H1 (cell line): ENCODE measurements at regions of chr16 and their contacts with region 1.

Region 1: DNA sequence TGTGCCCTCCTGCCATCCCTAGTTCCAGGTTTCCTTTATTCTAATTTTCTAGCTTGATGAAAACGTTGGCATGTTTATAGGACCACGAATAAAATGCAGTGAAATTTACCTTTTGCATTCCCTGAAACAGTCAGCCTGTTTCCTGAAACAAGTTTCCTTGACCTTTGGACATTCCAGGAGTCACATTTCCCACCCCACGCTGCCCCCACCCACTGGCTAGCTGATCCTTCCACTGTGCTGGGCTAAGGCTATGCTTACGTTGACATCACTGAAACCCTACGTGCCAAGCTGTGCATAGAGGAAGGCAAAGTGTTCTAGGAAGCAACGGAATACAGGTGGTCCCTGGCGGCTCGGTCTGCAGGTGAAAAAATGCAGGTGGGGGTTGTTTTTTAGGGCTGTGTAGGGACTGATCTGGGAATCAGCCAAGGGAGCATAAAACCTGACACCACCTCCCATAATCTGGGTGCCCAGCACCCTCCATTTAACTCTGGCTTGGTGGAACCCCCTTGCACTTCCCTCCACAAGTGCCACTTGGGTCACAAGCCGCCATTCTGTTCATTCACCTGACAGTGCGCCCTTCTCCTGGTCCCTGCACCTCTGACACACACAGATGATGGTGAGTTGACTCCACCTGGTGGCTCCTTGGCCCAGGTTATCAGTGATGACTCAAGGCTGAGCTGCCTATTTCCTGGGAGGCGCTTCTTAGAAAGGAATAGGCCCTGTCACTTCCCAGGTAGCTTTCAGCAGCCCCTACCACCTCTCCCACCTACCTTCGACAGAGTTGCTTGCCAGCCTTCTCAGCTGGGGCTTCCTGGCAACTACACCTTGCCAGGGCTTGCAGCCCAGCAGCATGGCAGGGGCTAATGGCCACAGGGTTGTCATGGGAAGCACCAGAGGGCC is 83.7 kb downstream of the N4BP1 start:
- DNase-seq: peak in 1 of 2 experiments; percentile 50
- H3K4me3 ChIP-seq: no peak overlapping the region
- H3K27ac ChIP-seq: no peak overlapping the region
- H3K4me1 ChIP-seq: peaks cover 0 to 3% (median 0%) of the 10 kb centered on the region in 4 experiments; a peak in 1 of 7 replicates
- H3K27me3 ChIP-seq: no peaks in the 10 kb centered on the region
- CTCF ChIP-seq: peak; percentile 76 to 90 (median 79)
- EP300 ChIP-seq: no peak
- POLR2A ChIP-seq: no peak
- RAD21 ChIP-seq: peak; percentile 93 to 95

Region 2: GRCh38 chr16:48353565-48354163 is 172.6 kb before region 1 on chr16:
- CTCF ChIA-PET with region 1: interaction called, 10 read pairs
- POLR2A ChIA-PET with region 1: interaction called, 3 read pairs
- DNase-seq: peak; percentile 51 to 63
- H3K4me3 ChIP-seq: no peak overlapping the region
- H3K27ac ChIP-seq: no peak overlapping the region
- H3K4me1 ChIP-seq: peaks cover 0 to 2% (median 0%) of the 10 kb centered on the region in 4 experiments; a peak in 1 of 7 replicates
- H3K27me3 ChIP-seq: no peaks in the 10 kb centered on the region
- CTCF ChIP-seq: peak; percentile 79 to 99 (median 96)
- EP300 ChIP-seq: no peak
- POLR2A ChIP-seq: peak in 1 of 2 experiments; percentile 22; a peak in 1 of 3 replicates
- RAD21 ChIP-seq: peak; percentile 78 to 84

Region 3: DNA sequence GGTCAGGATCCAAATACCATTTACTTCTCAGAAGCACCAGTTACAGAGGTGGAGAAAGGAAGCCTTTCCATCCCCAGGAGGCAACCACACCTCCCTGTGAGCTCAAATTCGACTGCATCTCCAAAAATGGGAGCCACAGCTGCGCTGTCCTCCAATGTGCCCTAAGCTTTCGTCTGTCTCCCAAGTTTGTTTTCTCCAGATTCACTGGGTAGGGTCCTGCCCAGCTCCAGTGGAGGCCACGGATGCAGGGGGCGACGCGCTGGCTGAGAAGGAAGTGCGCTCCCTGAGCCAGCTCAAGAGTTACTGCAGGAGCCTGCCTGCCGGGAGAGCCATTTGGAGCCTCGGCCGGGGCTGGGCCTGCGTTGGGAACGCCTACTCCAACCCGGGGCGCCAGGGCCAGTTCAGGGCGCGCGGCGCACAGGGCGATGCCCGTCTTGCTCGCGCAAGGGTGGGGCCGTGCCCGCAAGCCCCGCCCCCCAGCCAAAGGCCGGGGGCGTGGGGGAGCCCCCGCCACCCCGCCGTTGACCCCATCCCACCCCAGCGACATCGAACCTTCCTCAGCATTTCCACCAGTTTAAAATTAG is 160.6 kb before region 1 on chr16:
- CTCF ChIA-PET with region 1: interaction called, 12 read pairs
- POLR2A ChIA-PET with region 1: interaction called, 4 read pairs
- DNase-seq: peak; percentile 82 to 93
- H3K4me3 ChIP-seq: peak overlapping the region; percentile 60 to 87 (median 74)
- H3K27ac ChIP-seq: peak overlapping the region; percentile 54
- H3K4me1 ChIP-seq: peaks cover 2 to 11% (median 6%) of the 10 kb centered on the region in 4 experiments; a peak in 5 of 7 replicates
- H3K27me3 ChIP-seq: no peaks in the 10 kb centered on the region
- CTCF ChIP-seq: peak in 2 of 3 experiments; percentile 13 to 19; a peak in 2 of 4 replicates
- EP300 ChIP-seq: no peak
- POLR2A ChIP-seq: peak; percentile 88 to 92
- RAD21 ChIP-seq: no peak; a peak in 1 of 4 replicates

Region 4: GRCh38 chr16:48491517-48491916 is 34.8 kb before region 1 on chr16:
- CTCF ChIA-PET with region 1: no interaction called
- POLR2A ChIA-PET with region 1: no interaction called
- DNase-seq: no peak
- H3K4me3 ChIP-seq: no peak overlapping the region
- H3K27ac ChIP-seq: no peak overlapping the region
- H3K4me1 ChIP-seq: no peaks in the 10 kb centered on the region
- H3K27me3 ChIP-seq: no peaks in the 10 kb centered on the region
- CTCF ChIP-seq: no peak
- EP300 ChIP-seq: no peak
- POLR2A ChIP-seq: no peak
- RAD21 ChIP-seq: no peak

Region 5: GRCh38 chr16:48542020-48542473 is 15.7 kb after region 1 on chr16:
- CTCF ChIA-PET with region 1: interaction called, 10 read pairs
- POLR2A ChIA-PET with region 1: interaction called, 3 read pairs
- DNase-seq: no peak
- H3K4me3 ChIP-seq: no peak overlapping the region
- H3K27ac ChIP-seq: no peak overlapping the region
- H3K4me1 ChIP-seq: no peaks in the 10 kb centered on the region; a peak in 1 of 7 replicates
- H3K27me3 ChIP-seq: no peaks in the 10 kb centered on the region
- CTCF ChIP-seq: peak; percentile 46 to 62 (median 51)
- EP300 ChIP-seq: no peak
- POLR2A ChIP-seq: no peak
- RAD21 ChIP-seq: peak; percentile 67 to 77

Region 6: DNA sequence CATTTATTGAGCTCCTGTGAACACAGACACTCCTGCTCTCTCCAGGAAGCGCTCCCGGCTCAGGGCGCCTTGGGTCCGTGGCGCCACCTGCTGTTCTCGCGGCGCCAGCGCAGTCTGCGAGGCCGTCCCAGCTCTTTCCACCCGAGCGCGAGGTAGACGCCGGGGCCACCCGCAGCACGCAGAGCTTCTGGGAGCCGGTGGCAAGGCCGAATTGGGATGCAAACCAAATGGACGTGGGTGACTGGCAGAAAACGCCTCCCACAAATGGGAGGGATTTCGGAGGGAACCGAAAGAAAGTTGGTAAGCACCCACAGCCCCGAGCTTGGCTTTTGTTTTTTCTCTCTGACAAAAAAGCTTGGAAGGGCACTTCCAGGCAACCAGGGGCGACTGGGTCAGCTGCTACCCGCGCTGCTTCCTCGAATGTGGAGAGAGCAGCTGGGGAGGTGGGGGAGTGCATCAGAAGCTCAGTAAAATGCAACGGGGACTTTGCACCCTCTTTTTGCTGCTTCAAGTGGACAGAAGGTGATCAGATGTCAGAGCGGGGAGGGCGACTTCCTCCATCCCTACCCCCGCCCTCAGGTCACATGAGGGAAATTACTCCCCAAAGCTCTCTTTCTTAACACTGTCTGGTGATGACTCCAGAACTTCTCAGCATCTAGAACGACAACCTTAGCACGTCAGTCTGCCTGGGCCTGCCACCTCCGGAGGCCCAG is 97.2 kb after region 1 on chr16:
- CTCF ChIA-PET with region 1: interaction called, 32 read pairs
- POLR2A ChIA-PET with region 1: no interaction called
- DNase-seq: peak; percentile 59 to 92
- H3K4me3 ChIP-seq: peak overlapping the region; percentile 20 to 62 (median 58); a peak in 7 of 8 replicates
- H3K27ac ChIP-seq: no peak overlapping the region
- H3K4me1 ChIP-seq: peaks cover 0 to 2% (median 0%) of the 10 kb centered on the region in 4 experiments; a peak in 2 of 7 replicates
- H3K27me3 ChIP-seq: no peaks in the 10 kb centered on the region; a peak in 1 of 7 replicates
- CTCF ChIP-seq: peak; percentile 91 to 94 (median 92)
- EP300 ChIP-seq: no peak
- POLR2A ChIP-seq: no peak
- RAD21 ChIP-seq: peak; percentile 88 to 94

Region 7: GRCh38 chr16:48632137-48632774 is 105.9 kb after region 1 on chr16:
- CTCF ChIA-PET with region 1: interaction called, 14 read pairs
- POLR2A ChIA-PET with region 1: no interaction called
- DNase-seq: peak in 1 of 2 experiments; percentile 17
- H3K4me3 ChIP-seq: no peak overlapping the region
- H3K27ac ChIP-seq: no peak overlapping the region
- H3K4me1 ChIP-seq: no peaks in the 10 kb centered on the region; a peak in 1 of 7 replicates
- H3K27me3 ChIP-seq: no peaks in the 10 kb centered on the region
- CTCF ChIP-seq: no peak
- EP300 ChIP-seq: no peak
- POLR2A ChIP-seq: no peak
- RAD21 ChIP-seq: no peak